Right lobe of liver (tissue), 6 donors: ENCODE measurements at regions of chr10 and their contacts with region 1.

Region 1: DNA sequence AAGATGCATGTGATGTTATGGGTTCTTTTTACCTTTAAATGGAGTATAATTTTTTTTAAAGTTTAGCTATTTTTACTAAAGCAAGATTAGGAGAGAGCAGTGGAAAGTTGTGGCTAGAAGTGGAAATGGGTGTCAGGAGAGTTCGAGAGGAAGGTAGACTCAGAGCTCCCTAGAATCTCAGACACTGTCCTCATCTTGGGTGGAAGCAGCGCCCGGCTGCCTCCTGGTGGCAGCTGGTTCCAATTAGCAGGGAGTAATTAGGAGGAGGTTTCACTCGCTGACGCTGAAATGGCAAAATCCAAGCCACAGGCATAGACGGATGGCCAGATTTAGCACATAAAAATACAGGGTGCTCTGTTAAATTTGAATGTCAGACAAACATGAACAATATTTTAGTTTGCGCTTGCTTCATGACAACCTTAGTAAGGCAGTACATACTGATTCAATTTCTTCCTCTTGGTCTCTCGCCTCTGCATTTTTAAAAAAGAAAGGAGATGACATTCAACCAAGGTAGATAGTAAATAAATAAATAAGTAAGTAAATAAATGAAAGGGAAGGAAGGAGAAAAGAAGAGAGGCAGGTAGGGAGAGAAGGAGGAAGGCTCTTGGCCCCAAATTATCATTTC is 58.5 kb downstream of the LGI1 start:
- DNase-seq: peak; percentile 66 to 67 (median 66)
- ATAC-seq: peak; percentile 84 to 88 (median 86)
- H3K4me3 ChIP-seq: no peak overlapping the region
- H3K27ac ChIP-seq: no peak overlapping the region
- H3K4me1 ChIP-seq: no peaks in the 10 kb centered on the region
- H3K27me3 ChIP-seq: no peaks in the 10 kb centered on the region
- CTCF ChIP-seq: peak; percentile 76 to 77 (median 76)
- POLR2A ChIP-seq: no peak

Region 2: DNA sequence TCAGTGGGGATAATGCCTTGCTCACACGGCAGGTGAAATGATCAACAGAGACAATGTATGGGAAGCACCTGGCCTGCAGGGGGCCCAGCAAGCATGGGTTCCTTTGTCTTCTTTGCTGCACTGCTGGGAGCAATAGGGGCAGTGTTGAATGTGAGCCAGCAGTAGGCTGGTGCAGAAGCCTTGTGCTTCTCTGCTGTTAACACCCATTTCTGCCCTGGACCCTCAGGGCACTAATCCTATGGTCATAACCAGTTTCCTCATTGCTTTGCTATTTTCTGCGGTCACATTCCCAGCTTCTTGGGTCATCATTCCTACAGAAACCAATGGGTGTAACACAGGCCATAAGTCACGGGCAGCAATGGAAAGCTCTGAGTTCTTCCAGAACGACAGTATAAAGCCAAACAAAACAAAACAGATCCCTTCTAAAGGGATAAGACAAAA is 69.4 kb before region 1 on chr10:
- intact Hi-C with region 1: loop called in 1 of 2 experiments (anchors 10 kb)
- DNase-seq: peak in 2 of 3 donors; percentile 33 to 53
- ATAC-seq: peak; percentile 61 to 77 (median 62)
- H3K4me3 ChIP-seq: no peak overlapping the region
- H3K27ac ChIP-seq: no peak overlapping the region
- H3K4me1 ChIP-seq: peaks cover 0 to 3% (median 1%) of the 10 kb centered on the region in 4 donors
- H3K27me3 ChIP-seq: no peaks in the 10 kb centered on the region
- CTCF ChIP-seq: peak; percentile 37 to 55 (median 44)
- POLR2A ChIP-seq: no peak

Region 3: GRCh38 chr10:93867525-93867924 is 51.3 kb after region 1 on chr10:
- intact Hi-C with region 1: no loop called
- DNase-seq: no peak
- ATAC-seq: no peak
- H3K4me3 ChIP-seq: no peak overlapping the region
- H3K27ac ChIP-seq: no peak overlapping the region
- H3K4me1 ChIP-seq: no peaks in the 10 kb centered on the region
- H3K27me3 ChIP-seq: no peaks in the 10 kb centered on the region
- CTCF ChIP-seq: no peak
- POLR2A ChIP-seq: no peak